Activated T-helper 2 cell treated with anti-CD3 and anti-CD28 coated beads, Interferon-gamma antibody, Interleukin-2, Interleukin-4, amounts not matched to agents 10 μg/mL and 5 μg/mL and 100 μg/mL, durations not matched to agents 14 hours and 24 hours and 36 hours (primary cell): ENCODE measurements at regions of chr3 and their contacts with region 1.

Region 1: DNA sequence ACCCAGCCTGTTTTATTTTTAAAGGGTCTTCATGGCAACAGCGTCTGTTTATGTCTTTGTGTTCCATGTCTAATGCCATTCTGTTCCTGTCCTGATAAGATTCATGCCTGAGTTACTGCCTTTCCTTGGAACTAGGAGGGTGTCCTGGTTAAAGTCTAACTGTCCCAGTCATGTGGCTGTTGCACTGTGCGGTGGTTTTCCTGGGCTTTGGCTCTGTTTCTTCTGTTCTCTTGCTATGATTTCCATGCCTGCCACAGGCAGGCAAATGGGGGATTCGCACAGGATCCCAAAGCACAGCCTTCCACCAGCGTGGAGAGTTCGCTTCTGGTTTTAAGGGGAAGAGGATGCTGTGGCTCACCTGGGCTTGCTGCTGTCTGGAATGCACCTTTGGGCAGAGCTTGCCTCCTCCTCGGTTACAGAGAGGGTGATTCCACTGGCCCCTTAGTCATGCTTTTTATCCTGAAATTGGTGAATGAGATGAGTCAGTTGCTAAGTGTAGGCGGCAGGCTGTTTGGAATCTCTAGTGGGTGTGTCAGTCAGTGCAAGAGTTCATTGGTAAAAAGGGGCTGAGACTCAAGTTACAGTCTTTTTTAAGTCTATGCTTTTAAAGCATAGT is 86.8 kb downstream of the CCK start:
- DNase-seq: no peak
- H3K4me3 Mint-ChIP-seq: no peak overlapping the region
- H3K27ac Mint-ChIP-seq: no peak overlapping the region
- H3K4me1 Mint-ChIP-seq: peaks cover 10% of the 10 kb centered on the region
- H3K27me3 Mint-ChIP-seq: no peaks in the 10 kb centered on the region

Region 2: GRCh38 chr3:41893977-41894376 is 285.2 kb before region 1 on chr3:
- intact Hi-C with region 1: loop called (anchors 10 kb)
- DNase-seq: no peak
- H3K4me3 Mint-ChIP-seq: no peak overlapping the region
- H3K27ac Mint-ChIP-seq: no peak overlapping the region
- H3K4me1 Mint-ChIP-seq: no peaks in the 10 kb centered on the region
- H3K27me3 Mint-ChIP-seq: no peaks in the 10 kb centered on the region